Activated CD4-positive, alpha-beta memory T cell treated with anti-CD3 and anti-CD28 coated beads for 36 hours (primary cell): ENCODE measurements at regions of chr12 and their contacts with region 1.

Region 1: DNA sequence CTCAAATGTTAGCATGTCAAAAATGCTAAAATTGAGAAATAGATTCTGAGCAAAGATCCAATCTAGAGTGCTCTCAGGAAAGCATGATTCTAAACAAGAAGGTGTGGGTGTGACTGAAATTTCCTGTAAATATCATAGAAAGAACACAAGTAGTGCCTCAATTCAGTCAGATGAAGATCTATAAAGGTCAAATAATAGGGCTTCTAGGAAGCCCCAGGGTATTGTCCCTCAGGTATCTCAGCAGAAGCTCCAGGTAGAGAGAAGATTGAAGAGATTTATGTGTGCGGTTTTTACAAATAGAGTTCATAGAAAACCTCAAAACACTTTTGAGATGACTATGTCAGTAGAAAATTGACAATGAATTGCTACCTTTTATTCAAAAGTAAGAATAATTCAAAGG is 13.0 kb downstream of the KLRD1 start:
- DNase-seq: no peak
- H3K4me3 Mint-ChIP-seq: no peak overlapping the region
- H3K27ac Mint-ChIP-seq: peak overlapping the region; percentile 46
- H3K4me1 Mint-ChIP-seq: peaks cover 24% of the 10 kb centered on the region
- H3K27me3 Mint-ChIP-seq: peaks cover 21% of the 10 kb centered on the region

Region 2: GRCh38 chr12:9064201-9064814 is 1256.3 kb before region 1 on chr12:
- CTCF ChIA-PET with region 1: no interaction called
- POLR2A ChIA-PET with region 1: no interaction called
- intact Hi-C with region 1: no loop called
- DNase-seq: peak; percentile 73
- H3K4me3 Mint-ChIP-seq: peak overlapping the region; percentile 54
- H3K27ac Mint-ChIP-seq: no peak overlapping the region
- H3K4me1 Mint-ChIP-seq: peaks cover 7% of the 10 kb centered on the region
- H3K27me3 Mint-ChIP-seq: no peaks in the 10 kb centered on the region

Region 3: GRCh38 chr12:10147714-10148403 is 172.8 kb before region 1 on chr12:
- CTCF ChIA-PET with region 1: no interaction called
- POLR2A ChIA-PET with region 1: no interaction called
- intact Hi-C with region 1: loop called (anchors 1 kb)
- DNase-seq: no peak
- H3K4me3 Mint-ChIP-seq: no peak overlapping the region
- H3K27ac Mint-ChIP-seq: no peak overlapping the region
- H3K4me1 Mint-ChIP-seq: peaks cover 10% of the 10 kb centered on the region
- H3K27me3 Mint-ChIP-seq: peaks cover 13% of the 10 kb centered on the region

Region 4: DNA sequence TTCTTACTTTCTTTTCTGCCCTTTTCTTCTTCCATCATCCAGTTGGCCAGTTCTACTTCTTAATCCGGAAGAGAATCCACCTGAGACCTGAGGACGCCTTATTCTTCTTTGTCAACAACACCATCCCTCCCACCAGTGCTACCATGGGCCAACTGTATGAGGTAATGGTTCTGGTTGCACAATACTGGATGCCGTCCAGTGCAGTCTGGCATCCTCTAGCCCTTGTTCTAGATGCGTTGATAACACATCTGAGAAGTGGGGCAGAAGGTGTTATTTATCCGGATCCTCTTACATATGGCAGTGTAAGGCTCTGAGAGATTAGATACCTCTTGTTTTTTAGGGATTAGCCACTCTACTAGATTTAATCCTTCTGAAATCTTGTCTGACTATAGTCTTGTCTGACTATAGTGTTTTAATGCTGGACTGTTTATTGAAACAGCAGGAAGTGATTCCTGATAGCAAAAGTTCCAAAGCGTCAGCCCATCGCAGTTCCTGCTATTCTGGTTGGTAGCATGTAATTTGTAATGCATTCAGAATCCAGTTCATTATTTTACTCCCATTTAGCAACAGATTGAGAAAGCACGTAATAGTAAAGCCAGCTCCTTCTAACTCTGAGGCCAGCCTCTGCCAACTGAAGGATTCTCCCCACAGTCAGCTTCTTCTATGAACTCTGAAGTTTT is 100.1 kb before region 1 on chr12:
- CTCF ChIA-PET with region 1: no interaction called
- POLR2A ChIA-PET with region 1: no interaction called
- intact Hi-C with region 1: no loop called
- DNase-seq: no peak
- H3K4me3 Mint-ChIP-seq: no peak overlapping the region
- H3K27ac Mint-ChIP-seq: no peak overlapping the region
- H3K4me1 Mint-ChIP-seq: peaks cover 4% of the 10 kb centered on the region
- H3K27me3 Mint-ChIP-seq: no peaks in the 10 kb centered on the region

Region 5: DNA sequence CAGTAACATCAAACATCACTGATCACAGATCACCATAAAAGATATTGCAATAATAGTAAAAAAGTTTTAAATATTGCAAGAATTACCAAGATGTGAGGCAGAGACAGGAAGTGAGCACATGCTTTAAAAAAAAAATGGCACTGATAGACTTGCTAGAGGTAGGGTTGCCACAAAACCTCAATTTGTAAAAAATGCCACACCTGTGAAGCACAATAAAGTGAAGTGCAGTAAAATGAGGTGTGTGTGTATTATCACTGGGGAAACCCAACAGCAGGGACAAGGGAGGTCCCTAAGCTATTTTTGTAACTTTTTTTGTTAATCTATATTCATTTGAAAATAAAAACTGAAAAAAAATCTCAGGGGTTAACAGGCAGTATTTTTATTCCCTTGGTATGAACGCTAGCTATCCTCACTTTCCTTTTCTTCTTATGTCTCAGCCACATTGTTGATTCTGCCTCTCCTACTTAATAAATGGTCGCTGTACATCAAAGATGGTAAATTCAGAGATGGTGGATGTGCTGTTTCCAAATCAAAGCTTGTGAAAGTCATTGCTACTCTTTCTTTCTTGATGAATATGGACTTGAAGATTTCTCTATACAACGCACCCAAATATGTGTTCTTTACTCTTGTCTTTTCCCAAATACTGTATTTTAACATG is 26.9 kb before region 1 on chr12:
- CTCF ChIA-PET with region 1: interaction called, 3 read pairs
- POLR2A ChIA-PET with region 1: interaction called, 3 read pairs
- intact Hi-C with region 1: loop called (anchors 1 kb)
- DNase-seq: no peak
- H3K4me3 Mint-ChIP-seq: no peak overlapping the region
- H3K27ac Mint-ChIP-seq: no peak overlapping the region
- H3K4me1 Mint-ChIP-seq: peaks cover 17% of the 10 kb centered on the region
- H3K27me3 Mint-ChIP-seq: peaks cover 10% of the 10 kb centered on the region

Region 6: DNA sequence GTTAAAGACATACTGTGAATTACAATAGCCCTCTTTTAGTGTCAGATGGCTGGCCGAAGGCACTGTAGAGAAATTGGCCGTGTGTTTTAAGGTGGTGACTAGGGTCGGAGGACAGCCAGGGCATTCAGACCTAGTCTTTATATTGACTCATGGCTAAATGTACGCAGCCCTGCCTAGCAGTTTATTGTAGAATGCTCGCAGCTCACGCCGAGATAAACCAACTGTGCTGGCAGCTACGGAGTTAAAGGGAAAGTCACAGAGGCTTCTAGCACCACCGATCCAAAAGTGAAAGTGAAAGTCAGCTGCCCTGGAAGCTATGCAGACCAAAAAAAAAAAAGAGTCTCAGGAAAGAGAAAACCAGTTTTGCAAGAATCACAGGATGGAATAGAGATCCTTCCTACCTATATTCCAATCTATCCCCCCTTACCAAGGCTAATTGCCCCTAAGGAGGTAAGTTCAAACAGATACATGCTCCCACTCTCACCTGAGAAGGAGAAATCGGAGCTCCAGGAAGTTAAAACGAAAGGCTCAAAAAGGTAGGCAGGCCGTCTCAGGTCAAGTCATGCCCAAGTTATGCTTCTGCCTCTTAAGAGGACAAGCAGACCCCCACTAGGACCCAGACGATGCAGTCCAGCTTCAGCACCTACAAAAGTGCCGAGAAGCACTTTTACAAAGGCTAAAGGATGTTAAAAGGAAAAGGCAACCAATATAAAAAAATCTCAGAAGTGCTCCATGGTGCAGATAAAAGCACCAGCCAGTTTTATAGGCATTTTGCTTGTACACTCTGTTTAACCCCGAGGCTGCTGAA is 44.4 kb after region 1 on chr12:
- CTCF ChIA-PET with region 1: no interaction called
- POLR2A ChIA-PET with region 1: no interaction called
- intact Hi-C with region 1: loop called (anchors 2 kb)
- DNase-seq: peak; percentile 64
- H3K4me3 Mint-ChIP-seq: no peak overlapping the region
- H3K27ac Mint-ChIP-seq: no peak overlapping the region
- H3K4me1 Mint-ChIP-seq: no peaks in the 10 kb centered on the region
- H3K27me3 Mint-ChIP-seq: peaks cover 2% of the 10 kb centered on the region

Region 7: GRCh38 chr12:10392394-10392930 is 71.8 kb after region 1 on chr12:
- CTCF ChIA-PET with region 1: no interaction called
- POLR2A ChIA-PET with region 1: no interaction called
- intact Hi-C with region 1: no loop called
- DNase-seq: no peak
- H3K4me3 Mint-ChIP-seq: no peak overlapping the region
- H3K27ac Mint-ChIP-seq: no peak overlapping the region
- H3K4me1 Mint-ChIP-seq: no peaks in the 10 kb centered on the region
- H3K27me3 Mint-ChIP-seq: peaks cover 13% of the 10 kb centered on the region

Region 8: GRCh38 chr12:10540776-10541205 is 220.1 kb after region 1 on chr12:
- CTCF ChIA-PET with region 1: no interaction called
- POLR2A ChIA-PET with region 1: no interaction called
- intact Hi-C with region 1: loop called (anchors 1 kb)
- DNase-seq: no peak
- H3K4me3 Mint-ChIP-seq: no peak overlapping the region
- H3K27ac Mint-ChIP-seq: no peak overlapping the region
- H3K4me1 Mint-ChIP-seq: peaks cover 9% of the 10 kb centered on the region
- H3K27me3 Mint-ChIP-seq: peaks cover 39% of the 10 kb centered on the region